ENCODE measurements at regions of chr1 and their contacts with region 1.

Region 1: DNA sequence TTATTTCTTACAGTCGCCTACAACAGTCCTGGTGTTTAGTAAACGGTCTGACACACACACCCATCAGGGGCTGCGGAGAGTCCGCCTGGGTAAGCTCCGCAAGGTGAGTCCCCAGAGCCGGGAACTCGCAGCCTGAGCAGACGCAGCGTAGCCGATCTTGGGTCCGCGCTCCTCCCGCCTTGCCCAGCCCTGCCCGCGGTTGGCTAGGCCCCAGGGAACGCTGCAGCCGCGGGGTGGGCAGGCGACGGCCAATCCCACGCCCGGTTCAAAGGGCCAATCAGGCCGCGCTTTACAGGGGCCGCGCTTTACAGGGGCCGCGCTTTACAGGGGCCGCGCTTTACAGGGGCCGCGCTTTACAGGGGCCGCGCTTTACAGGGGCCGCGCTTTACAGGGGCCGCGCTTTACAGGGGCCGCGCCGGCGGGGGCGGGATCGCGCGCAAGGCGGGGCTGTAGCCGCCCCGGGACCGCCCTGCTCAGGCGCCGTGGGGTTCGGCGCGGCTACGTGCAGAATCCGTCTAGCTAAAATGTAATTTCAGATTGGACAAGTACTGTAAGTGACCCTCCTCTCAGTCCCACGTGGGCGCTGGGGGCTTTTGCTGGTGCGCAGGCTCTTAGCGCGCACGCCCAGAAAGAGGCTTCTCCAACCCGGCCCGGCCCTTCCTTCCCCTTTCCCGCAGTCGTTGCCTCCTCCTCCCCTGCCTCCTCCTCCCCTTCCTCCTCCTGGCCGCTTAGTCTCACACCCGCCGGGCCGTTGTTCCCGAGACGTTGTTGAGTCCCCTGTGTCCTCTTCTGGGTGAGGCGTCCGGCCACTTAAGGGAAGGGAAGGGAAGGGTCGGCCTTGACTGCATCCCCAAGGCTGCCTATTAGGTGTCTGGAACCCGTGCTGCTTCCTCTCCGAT is at the start of gene FGGY:
- DNase-seq: peak; percentile 99
- ATAC-seq: peak; percentile 94 to 96
- total RNA-seq, gene FGGY: 14.0 to 21.6 TPM

Region 2: GRCh38 chr1:59163268-59164092 is 133.1 kb before region 1 on chr1:
- intact Hi-C with region 1: loop called in 1 of 2 experiments (anchors 10 kb)
- DNase-seq: no peak
- ATAC-seq: peak in 1 of 2 donors; percentile 51

Region 3: GRCh38 chr1:59249396-59250137 is 47.0 kb before region 1 on chr1:
- intact Hi-C with region 1: no loop called
- DNase-seq: no peak
- ATAC-seq: peak; percentile 35 to 82

Region 4: DNA sequence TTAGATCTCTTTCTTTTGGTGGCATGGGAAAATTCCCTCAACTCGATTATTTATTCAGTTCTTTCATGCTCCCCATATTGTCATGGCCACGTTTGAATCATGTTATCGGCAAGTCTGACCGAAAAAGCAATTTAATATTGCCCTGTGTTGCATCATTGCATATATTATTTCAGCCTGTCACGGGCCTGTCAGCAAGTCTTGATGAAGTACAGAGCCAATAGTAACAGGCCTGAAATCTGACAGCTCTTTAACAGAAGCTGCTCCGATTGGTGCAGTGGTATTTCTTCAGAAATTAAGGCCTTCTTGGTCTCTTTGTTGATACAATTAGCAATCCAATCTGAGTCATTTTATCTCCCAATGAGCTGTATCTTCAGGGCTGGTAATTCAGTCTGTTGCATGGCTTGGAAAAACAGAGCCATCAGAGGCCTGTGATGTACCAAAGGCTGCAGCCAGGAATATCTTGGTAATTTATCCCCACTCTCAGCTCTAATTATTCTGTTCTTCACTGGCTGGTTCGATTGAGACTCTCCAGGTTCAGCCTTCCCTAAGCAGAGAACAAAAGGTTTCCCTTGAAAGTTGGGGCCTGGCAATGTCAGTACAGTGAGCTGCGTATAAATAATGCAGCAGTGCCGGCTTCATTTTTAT is 149.8 kb after region 1 on chr1:
- intact Hi-C with region 1: no loop called
- DNase-seq: no peak
- ATAC-seq: peak; percentile 71 to 90

Region 5: GRCh38 chr1:59699227-59699847 is 402.7 kb after region 1 on chr1:
- intact Hi-C with region 1: loop called in 1 of 2 experiments (anchors 5 kb)
- DNase-seq: no peak
- ATAC-seq: peak; percentile 23 to 53